Right ventricle myocardium inferior (tissue), 1 donor: ENCODE measurements at regions of chr20 and their contacts with region 1.

Region 1: DNA sequence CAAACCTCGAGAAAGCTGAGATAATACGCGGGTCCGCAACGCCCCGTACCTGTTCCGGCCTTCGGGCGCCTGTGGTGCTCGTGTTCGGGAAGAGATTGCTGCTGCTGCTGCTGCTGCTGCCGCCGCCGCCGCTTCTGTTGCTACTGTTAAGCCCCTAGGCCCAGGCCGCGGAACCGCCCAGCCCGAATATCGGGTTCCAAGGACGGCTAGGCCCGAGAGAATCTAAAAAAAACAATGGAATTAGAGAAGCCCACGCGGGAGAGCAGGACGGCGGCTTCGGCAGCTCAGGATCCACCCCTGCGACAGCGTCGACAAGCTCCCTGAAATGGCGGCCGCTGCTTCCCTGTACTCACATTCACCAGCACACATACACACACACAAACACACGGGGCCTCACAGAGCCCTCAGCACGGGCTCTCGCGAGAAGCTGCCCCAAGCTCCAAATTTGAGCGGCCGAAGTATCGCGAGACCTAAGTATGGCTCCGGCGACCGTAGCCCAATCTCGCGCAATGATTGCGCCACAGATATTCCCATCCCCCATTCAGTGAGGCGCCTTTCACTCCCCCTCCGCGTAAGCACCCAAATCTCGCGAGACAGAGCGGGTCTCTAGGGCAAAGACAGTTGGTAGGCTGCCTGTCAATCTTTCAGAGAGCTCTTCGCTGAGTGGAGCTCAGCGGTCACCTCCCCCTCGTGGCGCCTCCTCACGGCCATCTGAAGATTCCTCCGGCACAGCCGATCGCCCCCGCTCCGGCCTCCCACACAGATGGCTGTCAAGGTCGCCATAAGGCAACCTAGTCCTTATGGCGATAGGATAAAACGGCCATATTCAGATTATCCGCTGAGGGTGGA is at the start of gene RBM39:
- DNase-seq: peak; percentile 100
- ATAC-seq: peak; percentile 96
- total RNA-seq, gene RBM39: 133 TPM

Region 2: DNA sequence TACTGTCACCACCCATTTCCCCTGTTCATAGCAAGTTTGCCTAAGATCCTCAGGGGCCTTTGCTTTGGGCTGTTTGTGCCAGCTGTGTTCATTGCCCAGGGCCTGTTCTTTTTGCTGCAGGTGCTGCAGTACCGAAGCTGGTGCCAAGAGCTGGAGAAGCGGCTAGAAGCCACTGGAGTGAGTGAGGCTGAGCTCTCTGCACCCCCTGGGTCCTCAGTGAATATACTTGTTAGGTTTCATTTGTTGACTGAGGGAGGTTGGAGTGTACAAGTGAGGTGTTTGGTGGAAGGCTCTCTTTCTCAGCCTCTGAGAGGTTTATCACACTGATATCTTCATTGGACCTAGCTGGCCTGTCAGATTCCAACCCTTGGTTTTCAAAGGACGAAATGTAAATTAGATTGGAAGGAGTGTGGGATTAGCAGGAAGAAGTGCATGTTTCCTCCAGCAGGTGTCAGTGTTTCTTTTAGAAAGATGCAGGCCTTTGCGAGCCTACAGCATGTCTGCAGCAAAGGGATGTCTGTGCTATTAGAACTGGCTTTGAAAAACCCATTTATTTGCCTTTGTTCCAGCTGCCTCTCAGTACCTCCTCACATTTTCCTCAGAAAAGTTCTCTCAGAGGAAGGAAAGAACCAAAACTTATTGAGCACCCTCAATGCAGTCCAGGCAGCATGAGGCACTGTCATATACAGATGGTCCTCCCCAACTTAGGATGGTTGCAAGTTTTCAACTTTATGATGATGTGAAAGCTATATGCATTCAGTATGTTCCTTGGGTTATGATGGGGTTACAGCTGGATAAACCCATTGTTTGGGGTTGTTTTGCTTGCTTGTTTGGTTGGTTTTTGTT is 278.4 kb before region 1 on chr20:
- intact Hi-C with region 1: loop called (anchors 10 kb)
- DNase-seq: no peak
- ATAC-seq: peak; percentile 73

Region 3: GRCh38 chr20:35541783-35542588 is 200.1 kb before region 1 on chr20 and contains the start of gene ERGIC3:
- intact Hi-C with region 1: loop called (anchors 5 kb)
- DNase-seq: peak; percentile 99
- ATAC-seq: peak; percentile 100
- total RNA-seq, gene ERGIC3: 94.8 TPM

Region 4: DNA sequence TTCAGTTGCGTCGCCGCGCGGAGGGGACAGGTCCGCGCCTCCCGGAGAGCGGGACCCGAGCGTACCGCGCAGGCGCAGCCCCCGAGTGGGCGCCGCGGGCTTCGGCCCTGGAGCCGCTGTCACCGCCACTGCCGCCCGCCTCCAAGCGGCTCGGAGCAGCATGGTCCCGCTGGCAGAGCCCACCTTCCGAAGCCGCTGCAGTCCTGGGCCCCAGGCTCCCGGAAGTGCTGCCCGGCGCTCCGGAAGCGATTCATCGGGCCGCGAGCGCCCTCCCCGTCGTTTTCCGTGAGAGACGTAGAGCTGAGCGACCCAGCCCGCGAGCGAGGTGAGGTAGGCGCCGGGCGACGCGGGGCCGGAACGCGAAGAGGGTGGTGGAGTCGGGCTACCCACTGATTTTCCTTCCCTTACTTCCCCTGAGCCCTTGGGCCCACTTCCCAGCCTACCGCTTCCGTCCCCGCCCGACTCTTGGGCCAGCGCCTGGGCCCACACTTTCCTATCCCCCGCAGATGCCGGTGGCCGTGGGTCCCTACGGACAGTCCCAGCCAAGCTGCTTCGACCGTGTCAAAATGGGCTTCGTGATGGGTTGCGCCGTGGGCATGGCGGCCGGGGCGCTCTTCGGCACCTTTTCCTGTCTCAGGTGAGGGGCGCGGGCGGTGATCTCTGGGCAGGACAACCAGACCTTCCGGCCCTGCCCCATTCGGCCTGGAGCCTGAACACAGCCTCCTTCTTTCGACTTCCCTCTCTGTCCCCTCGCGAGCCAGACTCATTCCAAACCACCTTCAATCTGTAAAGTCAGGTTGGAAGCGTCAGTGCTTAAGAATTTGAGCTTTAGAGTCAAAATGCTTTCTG is 42.8 kb before region 1 on chr20 and contains the starts of genes NFS1 and ROMO1:
- intact Hi-C with region 1: loop called (anchors 5 kb)
- DNase-seq: peak; percentile 95
- ATAC-seq: peak; percentile 95
- total RNA-seq, gene NFS1: 54.3 TPM
- total RNA-seq, gene ROMO1: 190 TPM

Region 5: GRCh38 chr20:35771689-35772562 is 29.8 kb after region 1 on chr20 and contains the start of gene PHF20:
- intact Hi-C with region 1: loop called (anchors 1 kb)
- DNase-seq: peak; percentile 99
- ATAC-seq: peak; percentile 87
- total RNA-seq, gene PHF20: 36.7 TPM

Region 6: DNA sequence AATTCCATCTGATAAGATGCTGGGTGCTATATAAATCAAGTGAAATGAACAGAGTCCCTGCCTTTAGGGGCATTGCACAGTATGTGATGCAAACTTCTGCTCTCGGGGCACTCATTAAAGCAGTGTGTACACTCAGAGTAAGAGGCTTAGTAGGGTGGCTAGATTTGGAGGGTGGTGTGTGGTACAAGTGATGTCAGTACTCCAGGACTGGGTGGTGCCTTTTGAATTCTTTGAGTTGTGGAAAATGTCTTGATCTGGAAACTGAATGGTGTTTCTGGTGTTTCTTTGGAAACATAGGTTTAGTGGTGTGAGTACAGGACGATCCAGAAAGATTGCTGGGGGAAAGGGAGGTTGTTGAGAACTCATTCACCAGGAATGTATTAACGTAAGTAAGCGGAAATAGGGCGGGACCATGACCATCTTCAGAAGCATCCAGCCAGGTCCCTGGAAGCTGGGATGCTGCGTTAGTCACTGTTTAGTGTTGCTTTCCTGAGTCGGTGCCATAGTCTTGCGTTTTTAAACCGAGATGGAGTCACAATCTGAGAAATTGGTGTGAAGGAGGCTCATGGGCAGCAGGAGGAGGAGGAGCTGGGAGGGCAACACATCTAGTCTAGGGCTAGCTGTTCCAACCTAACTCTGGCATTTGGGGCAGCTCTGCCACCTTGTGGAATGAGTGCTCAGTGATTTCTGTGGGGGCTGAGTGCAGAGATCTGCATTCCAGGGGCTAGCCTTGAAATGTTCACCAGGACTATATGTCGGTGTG is 141.8 kb after region 1 on chr20:
- intact Hi-C with region 1: loop called (anchors 1 kb)
- DNase-seq: peak; percentile 73
- ATAC-seq: peak; percentile 78